MCF 10A (cell line): ENCODE measurements at regions of chr15 and their contacts with region 1.

Region 1: GRCh38 chr15:40893733-40894688 is at the start of gene VPS18:
- DNase-seq: peak; percentile 96
- H3K4me3 Mint-ChIP-seq: peak within 1 kb of the TSS; percentile 95
- H3K27ac Mint-ChIP-seq: peak within 1 kb of the TSS; percentile 98
- H3K4me1 Mint-ChIP-seq: peaks cover 31% of the 10 kb centered on the region
- H3K27me3 Mint-ChIP-seq: no peaks in the 10 kb centered on the region
- CTCF ChIP-seq: peak; percentile 92
- total RNA-seq, gene VPS18: 13.2 and 18.5 TPM in 2 replicates

Region 2: DNA sequence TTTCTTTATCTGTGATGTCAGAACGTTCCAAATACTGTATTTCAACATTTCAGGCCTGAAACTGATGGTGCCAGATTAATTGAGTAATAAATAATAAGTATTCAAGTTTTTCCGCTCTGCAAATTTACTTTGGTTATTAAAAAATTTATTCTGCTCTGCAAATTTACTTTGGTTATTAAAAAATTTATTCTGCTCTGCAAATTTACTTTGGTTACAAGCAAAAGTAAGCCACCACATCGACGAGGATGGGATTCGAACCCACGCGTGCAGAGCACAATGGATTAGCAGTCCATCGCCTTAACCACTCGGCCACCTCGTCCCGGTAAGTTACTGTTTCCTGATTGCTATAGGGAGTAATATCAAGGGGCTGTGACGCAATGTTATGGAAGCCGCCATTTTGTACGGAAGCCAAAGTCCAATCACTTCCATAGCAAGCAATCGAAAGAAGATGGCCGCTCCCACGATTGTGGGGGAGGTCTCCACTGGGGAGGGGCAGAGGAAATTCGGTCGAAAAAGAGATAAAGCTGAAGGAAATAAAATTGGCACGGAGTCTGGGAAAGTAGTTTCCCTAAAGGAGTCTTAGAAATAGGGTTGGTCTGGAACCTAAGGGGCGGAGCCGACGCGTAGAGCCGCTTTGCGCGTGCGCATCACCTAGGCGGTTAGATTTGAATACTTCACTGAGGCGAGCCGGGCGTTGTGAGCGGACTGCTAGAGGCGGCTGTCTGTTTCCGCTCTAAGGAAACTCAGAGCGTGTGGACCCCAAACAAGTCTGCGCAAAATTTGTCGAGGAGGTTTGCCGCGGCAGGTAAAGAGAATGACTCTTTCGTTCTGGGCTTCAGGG is 300.2 kb before region 1 on chr15 and contains the start of gene KNL1:
- CTCF ChIA-PET with region 1: interaction called, 4 read pairs
- POLR2A ChIA-PET with region 1: no interaction called
- intact Hi-C with region 1: loop called (anchors 2 kb)
- DNase-seq: peak; percentile 95
- H3K4me3 Mint-ChIP-seq: peak within 1 kb of the TSS; percentile 89
- H3K27ac Mint-ChIP-seq: peak within 1 kb of the TSS; percentile 100
- H3K4me1 Mint-ChIP-seq: peaks cover 11% of the 10 kb centered on the region
- H3K27me3 Mint-ChIP-seq: no peaks in the 10 kb centered on the region
- CTCF ChIP-seq: no peak
- total RNA-seq, gene KNL1: 7.9 and 11.4 TPM in 2 replicates

Region 3: GRCh38 chr15:40694688-40695468 is 199.1 kb before region 1 on chr15 and contains the start of gene RAD51:
- CTCF ChIA-PET with region 1: interaction called, 4 read pairs
- POLR2A ChIA-PET with region 1: interaction called, 11 read pairs
- intact Hi-C with region 1: no loop called
- DNase-seq: peak; percentile 94
- H3K4me3 Mint-ChIP-seq: peak within 1 kb of the TSS; percentile 96
- H3K27ac Mint-ChIP-seq: peak within 1 kb of the TSS; percentile 98
- H3K4me1 Mint-ChIP-seq: peaks cover 11% of the 10 kb centered on the region
- H3K27me3 Mint-ChIP-seq: no peaks in the 10 kb centered on the region
- CTCF ChIP-seq: no peak
- total RNA-seq, gene RAD51: 6.1 and 7.1 TPM in 2 replicates

Region 4: GRCh38 chr15:40782580-40783227 is 111.3 kb before region 1 on chr15:
- CTCF ChIA-PET with region 1: interaction called, 9 read pairs
- POLR2A ChIA-PET with region 1: interaction called, 8 read pairs
- intact Hi-C with region 1: loop called (anchors 2 kb)
- DNase-seq: peak; percentile 83
- H3K4me3 Mint-ChIP-seq: no peak overlapping the region
- H3K27ac Mint-ChIP-seq: no peak overlapping the region
- H3K4me1 Mint-ChIP-seq: peaks cover 17% of the 10 kb centered on the region
- H3K27me3 Mint-ChIP-seq: no peaks in the 10 kb centered on the region
- CTCF ChIP-seq: peak; percentile 72

Region 5: DNA sequence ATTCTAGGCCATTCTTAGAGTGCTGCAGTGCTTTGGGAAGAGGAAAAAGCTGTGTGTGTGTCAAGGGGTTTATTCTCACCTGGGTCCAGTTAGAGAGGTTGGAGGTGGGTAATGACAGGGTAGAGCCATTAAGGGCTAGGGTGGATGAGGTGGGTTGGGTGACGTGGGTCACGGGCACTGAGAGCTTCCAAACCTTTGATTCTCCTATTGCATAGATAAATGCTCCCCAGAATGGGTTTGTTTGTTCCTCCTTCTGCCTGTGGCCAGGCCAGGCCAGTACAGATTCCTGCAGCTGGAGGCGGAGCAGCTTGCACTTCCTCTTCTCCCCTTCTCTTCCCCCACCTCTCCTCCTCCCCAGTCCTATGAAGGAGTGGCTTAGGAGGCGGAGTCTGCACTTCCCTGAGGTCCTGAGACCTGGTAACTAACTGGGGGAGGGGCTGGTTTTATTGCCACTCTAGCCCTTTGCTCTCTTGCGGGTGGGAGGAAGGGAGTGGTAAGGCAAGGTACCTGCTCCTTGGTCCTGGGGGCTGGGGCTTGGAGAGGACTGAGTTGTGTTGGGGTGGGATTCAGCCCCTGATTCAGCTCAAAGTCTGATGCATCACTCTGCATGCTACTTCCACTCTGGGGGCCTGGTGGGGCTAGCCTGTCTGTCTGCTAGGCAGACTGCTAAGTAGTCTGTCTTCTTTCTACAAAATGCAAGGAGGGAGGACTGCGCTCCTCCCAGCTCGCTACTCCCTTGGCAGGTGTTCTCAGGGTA is 46.6 kb before region 1 on chr15:
- CTCF ChIA-PET with region 1: interaction called, 9 read pairs
- POLR2A ChIA-PET with region 1: interaction called, 58 read pairs
- intact Hi-C with region 1: no loop called
- DNase-seq: peak; percentile 69
- H3K4me3 Mint-ChIP-seq: peak overlapping the region; percentile 96
- H3K27ac Mint-ChIP-seq: peak overlapping the region; percentile 46
- H3K4me1 Mint-ChIP-seq: peaks cover 29% of the 10 kb centered on the region
- H3K27me3 Mint-ChIP-seq: no peaks in the 10 kb centered on the region
- CTCF ChIP-seq: no peak

Region 6: DNA sequence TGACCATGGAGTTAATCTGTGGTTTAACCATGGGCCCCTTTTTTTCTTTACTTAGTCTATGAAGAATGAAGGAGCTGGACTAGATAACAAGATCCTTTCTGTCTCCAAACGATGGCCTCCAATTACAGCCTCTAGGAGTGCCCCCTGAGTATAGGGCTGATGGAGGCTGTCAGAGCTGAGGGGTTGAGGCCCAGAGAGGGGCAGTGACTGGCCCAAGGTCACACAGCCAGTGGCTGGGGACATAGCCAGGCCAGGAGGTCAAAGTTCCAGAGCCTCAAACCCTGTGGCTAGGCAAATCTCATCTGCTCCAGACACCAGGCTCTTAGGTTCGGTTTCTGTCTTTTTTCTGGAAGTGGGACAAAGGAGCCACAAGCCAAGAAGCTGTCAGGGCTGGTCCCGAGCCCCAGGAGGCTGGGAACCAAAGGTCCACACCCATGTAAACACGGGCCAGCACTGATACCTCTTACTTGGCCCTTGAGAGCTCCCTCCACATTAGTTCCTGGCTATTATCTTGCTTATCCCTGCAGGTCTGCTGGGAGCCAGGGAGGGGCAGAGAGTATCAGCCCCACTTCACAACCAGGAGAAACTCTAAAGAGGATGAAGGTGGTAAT is 30.2 kb before region 1 on chr15:
- CTCF ChIA-PET with region 1: interaction called, 131 read pairs
- POLR2A ChIA-PET with region 1: interaction called, 68 read pairs
- intact Hi-C with region 1: no loop called
- DNase-seq: no peak
- H3K4me3 Mint-ChIP-seq: no peak overlapping the region
- H3K27ac Mint-ChIP-seq: no peak overlapping the region
- H3K4me1 Mint-ChIP-seq: peaks cover 42% of the 10 kb centered on the region
- H3K27me3 Mint-ChIP-seq: no peaks in the 10 kb centered on the region
- CTCF ChIP-seq: no peak

Region 7: DNA sequence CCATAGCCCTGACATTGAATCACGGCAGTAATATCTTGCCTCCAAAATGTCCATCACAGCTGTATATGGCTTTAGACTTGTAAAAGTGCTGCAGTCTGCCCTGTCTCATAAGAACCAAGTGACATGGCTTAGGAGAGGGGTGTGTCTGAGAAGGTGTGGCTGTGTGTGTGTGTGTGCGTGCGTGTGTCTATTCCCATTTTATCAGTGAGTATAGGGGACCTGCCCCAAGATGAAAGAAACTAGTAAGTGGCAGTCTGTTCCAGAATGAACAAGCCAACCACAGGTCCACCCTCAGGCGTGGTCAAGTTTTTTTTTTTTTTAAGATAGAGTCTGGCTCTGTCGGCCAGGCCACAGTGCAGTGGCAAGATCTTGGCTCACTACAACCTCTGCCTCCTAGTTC is 14.4 kb before region 1 on chr15:
- CTCF ChIA-PET with region 1: interaction called, 16 read pairs
- POLR2A ChIA-PET with region 1: interaction called, 25 read pairs
- intact Hi-C with region 1: no loop called
- DNase-seq: peak; percentile 26
- H3K4me3 Mint-ChIP-seq: no peak overlapping the region
- H3K27ac Mint-ChIP-seq: no peak overlapping the region
- H3K4me1 Mint-ChIP-seq: peaks cover 19% of the 10 kb centered on the region
- H3K27me3 Mint-ChIP-seq: no peaks in the 10 kb centered on the region
- CTCF ChIP-seq: no peak

Region 8: GRCh38 chr15:40918146-40918798 is 24.3 kb after region 1 on chr15:
- CTCF ChIA-PET with region 1: no interaction called
- POLR2A ChIA-PET with region 1: no interaction called
- intact Hi-C with region 1: no loop called
- DNase-seq: no peak
- H3K4me3 Mint-ChIP-seq: no peak overlapping the region
- H3K27ac Mint-ChIP-seq: no peak overlapping the region
- H3K4me1 Mint-ChIP-seq: no peaks in the 10 kb centered on the region
- H3K27me3 Mint-ChIP-seq: no peaks in the 10 kb centered on the region
- CTCF ChIP-seq: no peak